ENCODE measurements at regions of chr12 and their contacts with region 1.

Region 1: DNA sequence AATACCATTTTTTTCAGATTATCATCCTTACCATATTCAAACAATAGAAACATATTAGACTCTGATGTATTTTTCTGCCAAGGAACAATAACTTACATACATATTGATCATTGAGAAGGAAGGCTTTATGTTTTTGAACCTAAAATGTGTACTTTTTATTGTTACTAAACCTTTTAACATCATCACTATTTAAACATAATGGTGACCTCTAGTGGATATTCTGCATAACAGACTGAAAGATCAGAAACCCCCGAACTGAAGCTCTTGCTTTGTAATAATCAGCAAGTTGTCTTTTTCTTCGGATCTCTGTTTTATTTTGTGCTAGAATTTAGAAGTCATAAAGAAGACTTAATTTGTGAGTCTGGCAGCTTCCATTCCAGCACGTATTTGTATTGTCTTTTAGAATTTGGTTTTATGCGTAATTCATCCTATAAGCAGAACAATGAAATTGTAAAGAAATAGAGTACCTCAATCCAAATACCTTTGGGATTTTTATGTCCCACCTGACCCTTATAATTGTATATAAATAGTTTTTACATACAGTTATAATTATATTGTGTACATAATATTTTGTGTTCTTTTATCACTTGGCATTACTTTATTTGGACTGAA is 125.9 kb upstream of the ATF1 start:
- DNase-seq: peak; percentile 67
- ATAC-seq: peak; percentile 62
- H3K4me3 ChIP-seq: no peak overlapping the region
- H3K4me3 Mint-ChIP-seq: no peak overlapping the region
- H3K27ac ChIP-seq: peak overlapping the region in 1 of 2 donors; percentile 70
- H3K27ac Mint-ChIP-seq: peak overlapping the region; percentile 27
- H3K4me1 ChIP-seq: peaks cover 3 to 10% of the 10 kb centered on the region in 2 donors
- H3K4me1 Mint-ChIP-seq: peaks cover 18% of the 10 kb centered on the region
- H3K27me3 ChIP-seq: no peaks in the 10 kb centered on the region
- H3K27me3 Mint-ChIP-seq: no peaks in the 10 kb centered on the region
- CTCF ChIP-seq: peak; percentile 82

Region 2: GRCh38 chr12:50517456-50518048 is 120.4 kb before region 1 on chr12:
- CTCF ChIA-PET with region 1: interaction called, 6 read pairs
- POLR2A ChIA-PET with region 1: interaction called, 12 read pairs
- intact Hi-C with region 1: no loop called
- DNase-seq: peak; percentile 86
- ATAC-seq: peak; percentile 70
- H3K4me3 ChIP-seq: peak overlapping the region in 4 of 5 experiments; percentile 27 to 55 (median 38)
- H3K4me3 Mint-ChIP-seq: no peak overlapping the region
- H3K27ac ChIP-seq: peak overlapping the region; percentile 82 to 85
- H3K27ac Mint-ChIP-seq: no peak overlapping the region
- H3K4me1 ChIP-seq: peaks cover 86 to 97% of the 10 kb centered on the region in 2 donors
- H3K4me1 Mint-ChIP-seq: peaks cover 57% of the 10 kb centered on the region
- H3K27me3 ChIP-seq: no peaks in the 10 kb centered on the region
- H3K27me3 Mint-ChIP-seq: no peaks in the 10 kb centered on the region
- CTCF ChIP-seq: no peak